Dorsolateral prefrontal cortex (tissue), 120 donors: ENCODE measurements at regions of chr3 and their contacts with region 1.

Region 1: GRCh38 chr3:124761250-124761796 is 31.1 kb downstream of the UMPS start:
- DNase-seq: peak; percentile 76 to 93 (median 86)
- H3K4me3 ChIP-seq: peak overlapping the region in 22 of 59 donors; percentile 0 to 56 (median 22)
- H3K27ac ChIP-seq: peak overlapping the region in 24 of 59 donors; percentile 2 to 77 (median 38)
- H3K27me3 ChIP-seq: no peaks in the 10 kb centered on the region
- CTCF ChIP-seq: peak; percentile 92 to 99 (median 98)

Region 2: GRCh38 chr3:124905849-124906248 is 144.5 kb after region 1 on chr3:
- intact Hi-C with region 1: loop called (anchors 1 kb)
- DNase-seq: no peak
- H3K4me3 ChIP-seq: no peak overlapping the region
- H3K27ac ChIP-seq: no peak overlapping the region
- H3K27me3 ChIP-seq: no peaks in the 10 kb centered on the region
- CTCF ChIP-seq: no peak

Region 3: GRCh38 chr3:124986158-124987143 is 225.1 kb after region 1 on chr3:
- intact Hi-C with region 1: loop called in 1 of 2 experiments (anchors 10 kb)
- DNase-seq: no peak
- H3K4me3 ChIP-seq: no peak overlapping the region
- H3K27ac ChIP-seq: peak overlapping the region in 6 of 59 donors; percentile 2 to 62 (median 8)
- H3K27me3 ChIP-seq: no peaks in the 10 kb centered on the region
- CTCF ChIP-seq: peak in 51 of 56 donors; percentile 19 to 61 (median 40)